ENCODE measurements at regions of chr1 and their contacts with region 1.

Region 1: DNA sequence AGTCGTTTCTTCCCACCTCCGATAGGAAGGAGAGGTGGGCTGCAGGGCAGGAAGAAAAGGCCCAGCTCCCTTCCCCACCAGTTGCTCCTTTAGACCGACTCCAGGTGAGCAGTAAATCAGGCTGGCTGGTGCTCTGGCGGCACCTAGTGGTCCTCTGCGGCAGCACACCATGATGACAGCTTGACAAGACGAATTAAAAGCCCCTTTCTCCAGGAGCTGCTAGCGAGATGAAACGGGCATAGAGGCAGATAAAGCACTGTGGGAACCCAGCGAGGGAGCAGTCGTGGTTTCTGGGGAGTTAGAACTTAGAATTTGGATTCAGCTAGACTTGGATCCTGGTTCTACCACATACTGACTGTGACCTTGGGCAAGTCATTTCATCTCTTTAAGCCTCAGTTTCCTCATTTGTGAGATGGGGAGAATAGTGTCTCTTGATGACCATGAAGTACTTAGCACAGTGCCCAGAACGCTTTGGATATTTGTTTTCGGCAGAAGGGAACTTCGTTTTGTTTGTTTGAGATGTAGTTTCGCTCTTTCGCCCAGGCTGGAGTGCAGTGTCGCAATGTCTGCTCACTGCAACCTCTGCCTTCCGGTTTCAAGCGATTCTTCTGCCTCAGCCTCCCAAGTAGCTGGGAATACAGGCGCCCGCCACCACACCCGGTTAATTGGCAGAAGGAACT is 21.8 kb upstream of the COL9A2 start:
- DNase-seq: peak; percentile 73 to 80
- ATAC-seq: peak; percentile 86 to 95
- H3K4me3 ChIP-seq: peak overlapping the region; percentile 36
- H3K27ac ChIP-seq: no peak overlapping the region
- H3K4me1 ChIP-seq: no peaks in the 10 kb centered on the region
- CTCF ChIP-seq: peak; percentile 81
- EP300 ChIP-seq: no peak
- POLR2A ChIP-seq: no peak
- RAD21 ChIP-seq: peak; percentile 86 to 94

Region 2: DNA sequence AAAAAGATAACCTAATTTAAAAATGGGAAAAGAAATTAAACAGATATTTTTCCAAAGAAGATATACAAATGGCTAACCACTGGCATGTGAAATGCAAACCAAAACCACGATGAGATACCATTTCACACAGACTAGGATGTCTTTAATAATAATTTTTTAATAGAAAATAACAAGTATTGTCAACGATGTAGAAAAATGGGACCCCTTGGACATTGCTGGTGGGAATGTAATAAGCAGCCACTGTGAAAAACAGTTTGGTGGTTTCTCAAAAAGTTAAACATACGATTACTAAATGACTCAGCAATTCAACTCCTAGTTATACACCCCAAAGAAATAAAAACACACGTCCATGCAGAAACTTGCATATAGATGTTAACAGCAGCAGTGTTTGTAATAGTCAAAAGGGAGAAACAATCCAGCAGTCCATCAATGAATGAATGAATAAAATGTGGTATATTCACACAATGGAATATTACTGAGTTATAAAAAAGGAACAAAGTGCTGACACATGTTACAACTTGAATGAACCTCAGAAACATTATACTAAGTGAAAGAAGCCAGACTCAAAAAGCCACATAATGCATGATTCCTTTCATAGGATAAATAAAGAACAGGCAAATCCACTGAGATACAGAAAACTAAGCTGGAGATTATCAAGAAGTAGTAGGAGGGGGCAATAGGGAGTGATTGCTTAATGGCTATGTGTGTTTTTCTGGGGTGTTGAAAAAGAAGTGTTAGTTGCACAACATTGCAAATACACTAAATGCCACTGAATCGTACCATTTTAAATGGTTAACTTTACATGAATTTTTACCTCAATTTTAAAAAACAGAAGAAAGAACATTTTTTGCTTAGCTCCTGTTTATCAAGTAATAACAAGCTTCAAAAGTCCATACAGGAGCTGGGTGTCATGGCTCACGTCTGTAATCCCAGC is 245.9 kb before region 1 on chr1:
- CTCF ChIA-PET with region 1: interaction called, 16 read pairs
- POLR2A ChIA-PET with region 1: no interaction called
- DNase-seq: no peak
- ATAC-seq: no peak
- H3K4me3 ChIP-seq: no peak overlapping the region
- H3K27ac ChIP-seq: no peak overlapping the region
- H3K4me1 ChIP-seq: peaks cover 12% of the 10 kb centered on the region; the same call in 2 of the 3 replicates
- CTCF ChIP-seq: no peak
- EP300 ChIP-seq: no peak
- POLR2A ChIP-seq: no peak
- RAD21 ChIP-seq: no peak

Region 3: DNA sequence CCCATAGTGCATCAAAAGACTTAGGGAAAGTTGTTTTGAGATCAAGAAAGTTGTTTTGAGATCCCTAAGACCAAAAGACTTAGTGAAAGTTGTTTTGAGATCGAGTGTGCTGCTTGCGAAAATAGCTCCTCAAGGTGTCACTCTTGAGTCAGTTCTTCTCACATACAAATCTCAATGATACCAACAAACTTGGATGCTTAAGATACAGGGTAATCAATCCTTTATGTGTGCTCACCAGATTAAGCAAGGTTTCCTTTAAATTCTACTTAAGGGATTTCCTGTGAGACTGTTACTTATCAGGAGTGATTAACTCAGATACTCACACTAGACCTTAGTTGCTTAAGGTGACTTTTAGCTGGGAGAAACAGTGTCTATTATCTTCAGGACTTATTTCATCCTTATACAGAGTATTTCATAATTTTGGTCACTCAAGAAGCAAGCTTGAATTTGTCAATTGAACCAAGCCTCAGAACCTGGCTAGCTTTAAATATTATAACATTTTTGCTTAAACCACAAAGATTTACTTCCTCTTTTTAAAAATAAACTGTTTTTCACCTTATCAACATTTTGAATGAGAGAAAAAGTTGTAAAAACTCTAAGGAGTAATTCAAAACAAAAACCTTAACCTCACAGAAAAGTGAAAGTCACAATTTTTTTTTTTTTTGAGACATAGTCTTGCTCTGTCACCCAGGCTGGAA is 185.7 kb before region 1 on chr1:
- CTCF ChIA-PET with region 1: interaction called, 58 read pairs
- POLR2A ChIA-PET with region 1: no interaction called
- DNase-seq: peak in 1 of 2 experiments; percentile 61
- ATAC-seq: peak; percentile 43 to 66; a peak in 3 of 6 replicates
- H3K4me3 ChIP-seq: no peak overlapping the region
- H3K27ac ChIP-seq: no peak overlapping the region
- H3K4me1 ChIP-seq: no peaks in the 10 kb centered on the region
- CTCF ChIP-seq: peak; percentile 65
- EP300 ChIP-seq: no peak
- POLR2A ChIP-seq: no peak
- RAD21 ChIP-seq: peak; percentile 53 to 60; a peak in 4 of 5 replicates

Region 4: DNA sequence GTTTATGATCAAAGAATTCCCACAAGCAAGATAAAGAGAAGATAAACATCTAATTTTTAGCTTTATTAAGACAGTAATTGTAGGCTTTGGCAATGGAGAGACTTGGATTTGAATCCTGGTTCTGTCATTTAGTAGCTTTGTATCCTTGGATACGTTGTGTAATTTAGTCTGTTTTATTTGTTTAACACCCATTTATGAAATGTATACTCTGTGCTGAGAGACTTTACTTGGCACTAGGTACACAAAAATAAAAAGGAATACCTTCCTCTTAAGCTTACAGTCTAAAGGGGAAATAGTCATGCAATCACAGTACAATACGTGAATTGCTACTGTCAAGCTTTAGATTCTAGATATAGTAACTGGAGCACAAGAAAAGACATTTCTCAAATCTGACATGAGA is 57.0 kb before region 1 on chr1:
- CTCF ChIA-PET with region 1: no interaction called
- POLR2A ChIA-PET with region 1: no interaction called
- DNase-seq: no peak
- ATAC-seq: no peak
- H3K4me3 ChIP-seq: no peak overlapping the region
- H3K27ac ChIP-seq: no peak overlapping the region
- H3K4me1 ChIP-seq: no peaks in the 10 kb centered on the region
- CTCF ChIP-seq: no peak
- EP300 ChIP-seq: no peak
- POLR2A ChIP-seq: no peak
- RAD21 ChIP-seq: no peak

Region 5: GRCh38 chr1:40353082-40353481 is 14.2 kb after region 1 on chr1:
- CTCF ChIA-PET with region 1: interaction called, 17 read pairs
- POLR2A ChIA-PET with region 1: interaction called, 6 read pairs
- DNase-seq: no peak
- ATAC-seq: no peak
- H3K4me3 ChIP-seq: no peak overlapping the region
- H3K27ac ChIP-seq: no peak overlapping the region
- H3K4me1 ChIP-seq: no peaks in the 10 kb centered on the region
- CTCF ChIP-seq: no peak
- EP300 ChIP-seq: no peak
- POLR2A ChIP-seq: no peak
- RAD21 ChIP-seq: no peak

Region 6: GRCh38 chr1:40532844-40533424 is 194.0 kb after region 1 on chr1:
- CTCF ChIA-PET with region 1: no interaction called
- POLR2A ChIA-PET with region 1: no interaction called
- DNase-seq: peak; percentile 33 to 49
- ATAC-seq: 0 out of 6 replicates have a peak, but pooled peaks of 1 of the 2 experiments have one; percentile 28
- H3K4me3 ChIP-seq: no peak overlapping the region
- H3K27ac ChIP-seq: no peak overlapping the region
- H3K4me1 ChIP-seq: peaks cover 6% of the 10 kb centered on the region; the same call in 1 of the 3 replicates
- CTCF ChIP-seq: peak; percentile 24; the same call in 1 of the 3 replicates
- EP300 ChIP-seq: no peak
- POLR2A ChIP-seq: no peak
- RAD21 ChIP-seq: no peak

Measured in A549 (cell line).